CD14-positive monocyte (primary cell): ENCODE measurements at regions of chr9 and their contacts with region 1.

Region 1: GRCh38 chr9:91207729-91208418 is 153.8 kb downstream of the AUH start:
- DNase-seq: peak; percentile 89 to 95 (median 91)
- H3K4me3 ChIP-seq: peak overlapping the region in 1 of 3 experiments; percentile 51
- H3K4me3 Mint-ChIP-seq: peak overlapping the region; percentile 51 to 81
- H3K27ac ChIP-seq: peak overlapping the region; percentile 74 to 88
- H3K27ac Mint-ChIP-seq: peak overlapping the region; percentile 93 to 98 (median 96)
- H3K4me1 ChIP-seq: peaks cover 30 to 34% of the 10 kb centered on the region in 2 donors
- H3K4me1 Mint-ChIP-seq: peaks cover 38% of the 10 kb centered on the region
- H3K27me3 ChIP-seq: no peaks in the 10 kb centered on the region
- H3K27me3 Mint-ChIP-seq: peaks cover 0 to under 1% (median 0%) of the 10 kb centered on the region in 3 donors
- CTCF ChIP-seq: no peak

Region 2: DNA sequence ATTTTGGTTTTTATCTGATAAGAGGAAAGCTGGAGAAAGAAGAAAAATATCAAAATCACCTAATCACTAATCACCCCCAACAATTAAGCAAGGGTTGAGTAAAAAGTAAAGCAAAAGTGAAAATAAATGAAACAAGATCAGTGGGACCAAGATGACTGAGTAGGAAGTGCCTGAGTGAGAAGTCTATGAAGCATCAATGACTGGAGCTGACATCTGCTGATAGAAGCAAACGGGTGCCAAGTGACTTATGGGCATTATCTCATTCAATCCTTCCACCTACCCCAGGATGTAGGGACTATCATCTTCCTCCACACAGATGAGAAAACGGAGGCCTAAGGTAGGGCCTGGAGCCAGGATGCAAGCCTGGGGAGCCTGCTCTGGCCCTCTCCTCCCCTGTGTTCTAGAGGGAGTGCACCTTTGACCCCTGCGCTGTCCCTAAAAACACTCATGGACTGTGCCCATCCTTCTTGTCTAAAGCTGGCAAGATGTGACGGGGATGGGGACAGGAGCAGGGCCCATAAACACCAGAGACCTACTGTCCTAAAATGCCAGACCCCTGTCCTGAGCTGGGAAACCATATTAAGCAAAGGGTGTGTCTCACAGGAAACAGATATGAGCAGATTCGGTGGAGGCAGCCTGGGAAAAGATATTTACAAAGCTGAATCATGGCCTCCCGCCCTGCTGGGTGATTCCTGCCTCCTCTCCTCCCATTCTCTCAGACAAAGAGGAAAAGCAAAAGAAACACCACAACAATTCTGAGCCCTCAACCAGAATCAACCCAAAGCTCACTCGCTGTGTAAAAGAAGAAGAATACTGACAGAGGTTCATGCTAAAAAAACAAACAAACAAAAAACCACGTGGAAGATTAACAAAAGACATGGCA is 37.8 kb after region 1 on chr9:
- intact Hi-C with region 1: loop called (anchors 5 kb)
- DNase-seq: peak; percentile 8 to 22 (median 10)
- H3K4me3 ChIP-seq: no peak overlapping the region
- H3K4me3 Mint-ChIP-seq: no peak overlapping the region
- H3K27ac ChIP-seq: no peak overlapping the region
- H3K27ac Mint-ChIP-seq: peak overlapping the region in 6 of 7 donors; percentile 16 to 70 (median 60)
- H3K4me1 ChIP-seq: peaks cover 9 to 13% of the 10 kb centered on the region in 2 donors
- H3K4me1 Mint-ChIP-seq: peaks cover 15% of the 10 kb centered on the region
- H3K27me3 ChIP-seq: no peaks in the 10 kb centered on the region
- H3K27me3 Mint-ChIP-seq: peaks cover 0 to 3% (median 0%) of the 10 kb centered on the region in 3 donors
- CTCF ChIP-seq: no peak